ENCODE measurements at regions of chr2 and their contacts with region 1.

Region 1: GRCh38 chr2:60881047-60881932 is at the start of gene REL:
- DNase-seq: peak; percentile 92 to 95
- H3K4me3 ChIP-seq: peak within 1 kb of the TSS; percentile 80
- H3K4me3 Mint-ChIP-seq: peak within 1 kb of the TSS; percentile 91
- H3K27ac Mint-ChIP-seq: peak within 1 kb of the TSS; percentile 97
- H3K4me1 ChIP-seq: peaks cover 5% of the 10 kb centered on the region; the same call in 1 of the 2 replicates
- H3K4me1 Mint-ChIP-seq: peaks cover 20% of the 10 kb centered on the region
- H3K27me3 ChIP-seq: no peaks in the 10 kb centered on the region
- H3K27me3 Mint-ChIP-seq: no peaks in the 10 kb centered on the region
- CTCF ChIP-seq: no peak
- total RNA-seq, gene REL: 11.8 and 12.2 TPM in 2 replicates

Region 2: GRCh38 chr2:60707750-60708371 is 173.4 kb before region 1 on chr2:
- CTCF ChIA-PET with region 1: no interaction called
- POLR2A ChIA-PET with region 1: no interaction called
- intact Hi-C with region 1: loop called (anchors 5 kb)
- DNase-seq: peak in 1 of 2 experiments; percentile 34
- H3K4me3 ChIP-seq: no peak overlapping the region
- H3K4me3 Mint-ChIP-seq: no peak overlapping the region
- H3K27ac Mint-ChIP-seq: no peak overlapping the region
- H3K4me1 ChIP-seq: no peaks in the 10 kb centered on the region
- H3K4me1 Mint-ChIP-seq: peaks cover 6% of the 10 kb centered on the region
- H3K27me3 ChIP-seq: no peaks in the 10 kb centered on the region
- H3K27me3 Mint-ChIP-seq: no peaks in the 10 kb centered on the region
- CTCF ChIP-seq: peak; percentile 76 to 77

Region 3: GRCh38 chr2:60806988-60807681 is 74.2 kb before region 1 on chr2:
- CTCF ChIA-PET with region 1: interaction called, 9 read pairs
- POLR2A ChIA-PET with region 1: no interaction called
- intact Hi-C with region 1: loop called (anchors 5 kb)
- DNase-seq: no peak
- H3K4me3 ChIP-seq: no peak overlapping the region
- H3K4me3 Mint-ChIP-seq: no peak overlapping the region
- H3K27ac Mint-ChIP-seq: no peak overlapping the region
- H3K4me1 ChIP-seq: no peaks in the 10 kb centered on the region
- H3K4me1 Mint-ChIP-seq: peaks cover 6% of the 10 kb centered on the region
- H3K27me3 ChIP-seq: no peaks in the 10 kb centered on the region
- H3K27me3 Mint-ChIP-seq: no peaks in the 10 kb centered on the region
- CTCF ChIP-seq: no peak

Region 4: GRCh38 chr2:60858897-60859376 is 22.4 kb before region 1 on chr2:
- CTCF ChIA-PET with region 1: no interaction called
- POLR2A ChIA-PET with region 1: no interaction called
- intact Hi-C with region 1: loop called (anchors 2 kb)
- DNase-seq: peak; percentile 51 to 58
- H3K4me3 ChIP-seq: no peak overlapping the region
- H3K4me3 Mint-ChIP-seq: no peak overlapping the region
- H3K27ac Mint-ChIP-seq: no peak overlapping the region
- H3K4me1 ChIP-seq: peaks cover 14% of the 10 kb centered on the region
- H3K4me1 Mint-ChIP-seq: peaks cover 12% of the 10 kb centered on the region
- H3K27me3 ChIP-seq: no peaks in the 10 kb centered on the region
- H3K27me3 Mint-ChIP-seq: no peaks in the 10 kb centered on the region
- CTCF ChIP-seq: no peak

Region 5: DNA sequence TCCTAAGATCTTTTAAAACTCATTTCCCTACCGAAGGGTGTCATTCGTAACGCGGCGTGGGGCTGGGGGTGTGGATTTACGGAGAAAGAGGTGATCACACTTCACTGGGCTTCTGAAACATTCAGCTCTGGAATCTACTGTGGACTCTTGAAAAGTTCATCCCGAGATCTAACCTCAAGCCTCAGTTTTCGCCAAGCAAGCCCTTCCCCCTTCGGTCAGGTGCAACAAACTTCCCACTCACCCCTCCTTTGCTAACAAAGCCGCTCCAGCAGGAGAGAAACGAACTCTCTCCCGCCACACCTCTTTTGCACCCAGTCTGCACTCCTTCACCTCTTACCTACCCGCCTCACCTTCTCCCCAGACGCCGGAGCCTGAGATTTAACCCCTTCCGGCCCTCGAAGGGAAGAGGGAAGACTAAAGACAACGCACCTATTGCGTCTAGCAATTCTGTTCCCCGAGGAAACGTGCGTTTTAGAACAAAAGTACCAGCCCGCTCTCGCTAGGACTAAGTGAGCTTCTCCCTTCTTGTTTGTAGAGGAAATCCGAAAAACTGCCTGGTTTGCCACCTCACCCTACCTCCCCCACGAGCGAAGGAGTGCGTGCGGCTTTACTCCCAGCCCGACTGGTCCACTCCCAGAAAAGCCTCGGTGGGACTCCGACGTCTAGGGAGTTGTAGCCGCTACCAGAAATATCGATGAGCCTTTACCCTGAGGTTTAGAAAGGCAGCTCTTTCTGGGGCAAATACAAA is 135.7 kb after region 1 on chr2:
- CTCF ChIA-PET with region 1: no interaction called
- POLR2A ChIA-PET with region 1: no interaction called
- intact Hi-C with region 1: loop called (anchors 2 kb)
- DNase-seq: peak; percentile 87 to 94
- H3K4me3 ChIP-seq: peak overlapping the region; percentile 67
- H3K4me3 Mint-ChIP-seq: peak overlapping the region; percentile 88
- H3K27ac Mint-ChIP-seq: peak overlapping the region; percentile 97
- H3K4me1 ChIP-seq: peaks cover 8% of the 10 kb centered on the region
- H3K4me1 Mint-ChIP-seq: no peaks in the 10 kb centered on the region
- H3K27me3 ChIP-seq: no peaks in the 10 kb centered on the region
- H3K27me3 Mint-ChIP-seq: no peaks in the 10 kb centered on the region
- CTCF ChIP-seq: no peak

Region 6: DNA sequence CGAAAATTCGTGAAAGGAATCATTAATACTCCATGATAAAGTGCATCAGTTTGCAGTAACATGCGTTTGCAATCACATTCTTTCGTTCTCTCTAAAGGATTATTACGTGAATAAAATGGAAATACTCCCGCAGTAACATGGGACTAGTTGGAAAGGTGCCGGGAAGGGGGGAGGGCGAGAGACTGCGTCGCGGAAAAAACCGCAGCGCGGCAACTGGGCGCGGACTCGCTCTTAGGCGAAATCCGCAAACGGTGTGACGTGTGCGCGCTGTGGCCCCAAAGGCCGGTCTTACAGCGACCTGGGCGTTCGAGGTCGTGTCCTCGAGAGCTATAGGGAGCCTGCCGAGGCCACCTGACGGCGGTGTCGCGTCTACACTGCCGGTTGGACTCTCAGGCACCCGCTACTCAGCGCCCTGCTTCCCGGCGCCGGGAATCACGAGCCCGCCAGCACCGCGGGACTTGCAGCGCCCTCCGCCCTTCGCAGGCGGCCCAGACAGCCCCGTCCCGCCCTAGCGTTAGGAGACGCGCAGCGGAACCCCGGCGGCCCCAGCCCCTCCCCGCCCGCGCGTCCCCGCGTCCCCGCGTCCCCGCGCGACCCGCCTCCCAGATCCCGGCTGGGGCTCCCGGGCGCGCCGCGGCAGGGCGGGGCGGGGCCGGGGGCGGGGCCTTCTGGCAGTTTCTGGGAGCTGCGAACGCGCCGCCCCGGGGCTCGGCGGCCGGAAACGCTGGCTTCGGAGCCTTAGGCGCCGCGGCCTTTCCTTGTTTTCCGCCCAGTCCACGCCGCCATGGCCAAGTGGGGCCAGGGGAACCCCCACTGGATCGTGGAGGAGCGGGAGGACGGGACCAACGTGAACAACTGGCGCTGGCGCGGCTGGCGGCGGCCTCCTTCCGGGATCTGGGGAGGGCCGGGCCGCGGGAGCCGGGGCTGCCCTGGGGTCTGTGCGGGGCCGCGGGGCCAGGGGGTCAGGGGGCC is 295.8 kb after region 1 on chr2:
- CTCF ChIA-PET with region 1: no interaction called
- POLR2A ChIA-PET with region 1: interaction called, 4 read pairs
- intact Hi-C with region 1: loop called (anchors 1 kb)
- DNase-seq: peak; percentile 96 to 97
- H3K4me3 ChIP-seq: peak overlapping the region; percentile 82
- H3K4me3 Mint-ChIP-seq: peak overlapping the region; percentile 83
- H3K27ac Mint-ChIP-seq: peak overlapping the region; percentile 80
- H3K4me1 ChIP-seq: peaks cover 16% of the 10 kb centered on the region; the same call in 1 of the 2 replicates
- H3K4me1 Mint-ChIP-seq: peaks cover 16% of the 10 kb centered on the region
- H3K27me3 ChIP-seq: no peaks in the 10 kb centered on the region
- H3K27me3 Mint-ChIP-seq: no peaks in the 10 kb centered on the region
- CTCF ChIP-seq: peak in 1 of 2 experiments; percentile 13

Measured in Caco-2 (cell line).